H1 (cell line): ENCODE measurements at regions of chr10 and their contacts with region 1.

Region 1: DNA sequence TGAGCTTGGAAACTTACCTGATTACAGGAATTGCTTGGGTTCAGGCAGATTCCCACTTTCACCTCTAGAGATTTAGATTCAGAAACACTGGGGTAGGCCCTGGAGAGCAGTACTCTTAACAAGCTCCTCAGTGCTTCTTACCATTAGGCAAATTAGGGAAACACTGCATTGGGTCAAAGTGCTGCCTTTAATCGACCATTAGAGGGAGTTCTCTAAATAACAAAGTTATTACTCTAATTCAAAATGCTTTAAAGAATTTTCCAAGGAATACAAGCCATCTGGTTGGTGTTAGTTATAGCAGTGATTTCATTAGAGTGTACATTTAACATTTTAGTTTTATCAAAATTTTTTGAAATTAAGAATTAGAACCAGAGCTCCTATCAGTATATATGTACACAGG is 324.5 kb downstream of the GFRA1 start:
- DNase-seq: no peak
- H3K4me3 ChIP-seq: no peak overlapping the region
- H3K27ac ChIP-seq: no peak overlapping the region
- H3K4me1 ChIP-seq: peaks cover 0 to 4% (median 1%) of the 10 kb centered on the region in 4 experiments; a peak in 1 of 7 replicates
- H3K27me3 ChIP-seq: no peaks in the 10 kb centered on the region
- CTCF ChIP-seq: peak in 2 of 3 experiments; percentile 35 to 51; a peak in 2 of 4 replicates
- EP300 ChIP-seq: no peak
- POLR2A ChIP-seq: no peak
- RAD21 ChIP-seq: peak; percentile 6 to 40; a peak in 2 of 4 replicates

Region 2: GRCh38 chr10:115936926-115937767 is 11.3 kb before region 1 on chr10:
- CTCF ChIA-PET with region 1: interaction called, 20 read pairs
- POLR2A ChIA-PET with region 1: no interaction called
- DNase-seq: no peak
- H3K4me3 ChIP-seq: no peak overlapping the region
- H3K27ac ChIP-seq: no peak overlapping the region
- H3K4me1 ChIP-seq: peaks cover 0 to 3% (median 0%) of the 10 kb centered on the region in 4 experiments; a peak in 1 of 7 replicates
- H3K27me3 ChIP-seq: no peaks in the 10 kb centered on the region
- CTCF ChIP-seq: no peak
- EP300 ChIP-seq: no peak
- POLR2A ChIP-seq: no peak
- RAD21 ChIP-seq: no peak

Region 3: GRCh38 chr10:115963848-115964247 is 15.4 kb after region 1 on chr10:
- CTCF ChIA-PET with region 1: interaction called, 15 read pairs
- POLR2A ChIA-PET with region 1: no interaction called
- DNase-seq: no peak
- H3K4me3 ChIP-seq: no peak overlapping the region
- H3K27ac ChIP-seq: no peak overlapping the region
- H3K4me1 ChIP-seq: peaks cover 0 to 3% (median 0%) of the 10 kb centered on the region in 4 experiments; a peak in 1 of 7 replicates
- H3K27me3 ChIP-seq: no peaks in the 10 kb centered on the region; a peak in 1 of 7 replicates
- CTCF ChIP-seq: no peak
- EP300 ChIP-seq: no peak
- POLR2A ChIP-seq: no peak
- RAD21 ChIP-seq: no peak